ENCODE measurements at regions of chr3 and their contacts with region 1.

Region 1: DNA sequence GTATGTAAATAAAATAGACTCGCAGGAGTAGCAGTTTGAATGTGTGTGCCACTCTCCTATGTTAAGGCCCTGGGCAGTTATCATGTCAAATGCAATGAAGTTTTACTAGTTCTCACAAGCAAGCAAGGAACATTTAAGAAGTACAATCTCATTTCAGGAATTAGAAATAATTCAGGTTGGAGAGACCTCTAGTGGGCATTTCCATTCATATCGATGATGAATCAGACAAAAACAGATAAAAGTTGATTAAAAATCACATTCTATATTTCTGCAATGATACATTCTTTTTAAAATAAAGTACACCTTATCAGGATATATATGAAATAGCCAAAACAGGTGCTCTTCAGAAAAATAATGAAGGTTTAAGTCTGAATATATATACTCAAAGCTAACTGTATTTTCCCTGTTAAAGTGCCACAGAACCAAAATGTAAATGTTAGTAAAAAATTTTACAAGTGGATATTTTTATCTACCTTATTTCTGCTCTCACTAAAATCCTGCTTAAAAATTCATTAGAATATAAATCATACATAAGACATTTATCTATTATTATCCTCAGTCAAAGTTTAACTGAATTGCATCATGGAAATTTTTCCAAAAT is 492.4 kb upstream of the FRG2C start:
- DNase-seq: no peak
- ATAC-seq: no peak
- H3K4me3 ChIP-seq: no peak overlapping the region
- H3K27ac ChIP-seq: no peak overlapping the region
- H3K4me1 ChIP-seq: no peaks in the 10 kb centered on the region
- H3K27me3 ChIP-seq: no peaks in the 10 kb centered on the region

Region 2: GRCh38 chr3:73868688-73869315 is 1302.9 kb before region 1 on chr3:
- intact Hi-C with region 1: loop called in 2 of 4 experiments (anchors 10 kb)
- DNase-seq: peak in 1 of 3 donors; percentile 11
- ATAC-seq: peak in 1 of 2 donors; percentile 55
- H3K4me3 ChIP-seq: no peak overlapping the region
- H3K27ac ChIP-seq: no peak overlapping the region
- H3K4me1 ChIP-seq: no peaks in the 10 kb centered on the region
- H3K27me3 ChIP-seq: no peaks in the 10 kb centered on the region

Region 3: GRCh38 chr3:73874601-73875369 is 1296.9 kb before region 1 on chr3:
- intact Hi-C with region 1: loop called in 2 of 4 experiments (anchors 10 kb)
- DNase-seq: no peak
- ATAC-seq: no peak
- H3K4me3 ChIP-seq: no peak overlapping the region
- H3K27ac ChIP-seq: no peak overlapping the region
- H3K4me1 ChIP-seq: no peaks in the 10 kb centered on the region
- H3K27me3 ChIP-seq: no peaks in the 10 kb centered on the region